GM12878 (cell line): ENCODE measurements at regions of chr4 and their contacts with region 1.

Region 1: GRCh38 chr4:109815151-109816081 is at the start of gene GAR1:
- DNase-seq: peak; percentile 72
- ATAC-seq: peak; percentile 94
- H3K4me3 ChIP-seq: peak within 1 kb of the TSS; percentile 96
- H3K27ac ChIP-seq: peak within 1 kb of the TSS; percentile 91
- H3K4me1 ChIP-seq: no peaks in the 10 kb centered on the region
- H3K27me3 ChIP-seq: no peaks in the 10 kb centered on the region
- CTCF ChIP-seq: 0 out of 6 replicates have a peak, but pooled peaks of 1 of the 3 experiments have one; percentile 2
- EP300 ChIP-seq: peak in 1 of 2 experiments; percentile 19; a peak in 1 of 4 replicates
- POLR2A ChIP-seq: peak; percentile 81; the same call in 1 of the 2 replicates
- RAD21 ChIP-seq: no peak
- polyA plus RNA-seq, gene GAR1: 16.6 to 20.5 TPM

Region 2: DNA sequence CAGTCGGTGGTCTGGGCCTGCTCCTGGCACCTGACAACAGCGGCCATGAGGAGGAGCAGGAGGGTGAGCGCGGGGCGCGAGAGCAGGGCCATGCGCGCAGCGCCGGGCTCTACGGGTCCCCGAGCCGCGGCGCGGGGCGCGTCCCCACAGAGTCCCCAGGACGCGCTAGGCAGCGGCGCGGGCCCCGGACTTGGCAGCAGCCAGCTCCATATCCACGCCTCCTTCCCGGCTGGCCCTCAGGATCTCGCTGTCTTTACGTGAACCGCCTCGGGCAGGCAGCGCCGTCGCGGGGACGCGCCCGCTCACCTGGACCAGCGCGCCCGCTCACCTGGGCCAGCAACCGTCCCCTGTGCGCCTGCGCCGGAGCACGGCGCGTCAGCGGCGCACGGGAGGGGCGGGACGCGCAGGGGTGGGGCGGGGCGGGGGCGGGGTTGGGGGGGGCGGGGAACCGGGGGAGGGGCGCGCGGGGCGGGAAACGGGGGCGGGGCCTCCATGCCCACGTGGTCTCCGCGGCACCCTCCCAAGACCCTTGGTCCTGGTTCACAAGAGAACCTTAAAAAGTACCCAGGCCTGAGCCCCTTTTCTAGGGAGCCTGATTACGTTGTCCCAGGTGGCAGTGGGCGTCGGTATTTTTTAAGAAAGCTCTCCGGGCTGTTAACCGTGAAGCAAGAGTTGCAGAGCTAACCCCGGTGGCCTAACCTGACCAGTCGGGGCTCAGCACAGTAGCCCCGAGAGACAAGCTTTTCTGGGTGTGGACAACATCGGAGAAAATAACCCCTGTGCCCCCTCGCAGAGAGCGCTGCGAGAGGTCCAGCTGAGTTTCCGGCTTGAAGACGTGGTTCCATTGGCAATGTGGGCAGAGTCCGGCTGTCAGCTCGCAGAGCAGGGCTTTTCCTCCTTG is 85.4 kb before region 1 on chr4 and contains the start of gene PLA2G12A:
- CTCF ChIA-PET with region 1: no interaction called
- POLR2A ChIA-PET with region 1: interaction called, 4 read pairs
- RAD21 ChIA-PET with region 1: no interaction called
- SMC1A ChIA-PET with region 1: no interaction called
- in situ Hi-C with region 1: no loop called
- intact Hi-C with region 1: loop called (anchors 2 kb)
- DNase-seq: peak; percentile 16
- ATAC-seq: peak; percentile 93
- H3K4me3 ChIP-seq: peak within 1 kb of the TSS; percentile 91
- H3K27ac ChIP-seq: peak within 1 kb of the TSS; percentile 64
- H3K4me1 ChIP-seq: no peaks in the 10 kb centered on the region
- H3K27me3 ChIP-seq: no peaks in the 10 kb centered on the region
- CTCF ChIP-seq: no peak
- EP300 ChIP-seq: no peak
- POLR2A ChIP-seq: peak; percentile 75
- RAD21 ChIP-seq: no peak
- polyA plus RNA-seq, gene PLA2G12A: 3.7 to 6.2 TPM

Region 3: DNA sequence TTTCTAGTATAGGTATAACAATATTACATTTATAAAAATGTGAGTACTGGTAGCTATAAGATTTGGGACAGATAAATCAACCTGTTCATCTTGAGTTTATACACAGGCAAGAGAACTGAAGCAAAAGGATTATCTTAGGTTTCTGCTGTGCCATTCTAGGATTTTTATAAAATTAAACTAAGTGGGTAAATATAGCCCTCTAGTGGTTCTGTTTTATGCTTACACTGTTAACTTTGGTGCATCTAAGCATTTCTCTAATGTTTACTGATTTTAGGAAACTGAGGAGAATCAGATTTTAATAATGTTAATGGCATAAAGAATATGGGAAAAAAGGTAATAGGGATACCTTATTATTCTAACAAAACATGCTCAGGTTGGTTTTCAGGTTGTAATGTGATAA is 11.3 kb after region 1 on chr4:
- CTCF ChIA-PET with region 1: interaction called, 10 read pairs
- POLR2A ChIA-PET with region 1: no interaction called
- RAD21 ChIA-PET with region 1: no interaction called
- SMC1A ChIA-PET with region 1: interaction called, 3 read pairs
- in situ Hi-C with region 1: no loop called
- intact Hi-C with region 1: no loop called
- DNase-seq: no peak
- ATAC-seq: peak; percentile 80
- H3K4me3 ChIP-seq: no peak overlapping the region
- H3K27ac ChIP-seq: no peak overlapping the region
- H3K4me1 ChIP-seq: no peaks in the 10 kb centered on the region
- H3K27me3 ChIP-seq: no peaks in the 10 kb centered on the region
- CTCF ChIP-seq: peak; percentile 22 to 54 (median 40); a peak in 4 of 6 replicates
- EP300 ChIP-seq: no peak
- POLR2A ChIP-seq: no peak
- RAD21 ChIP-seq: peak; percentile 69

Region 4: GRCh38 chr4:109990261-109991257 is 175.1 kb after region 1 on chr4:
- CTCF ChIA-PET with region 1: no interaction called
- POLR2A ChIA-PET with region 1: no interaction called
- RAD21 ChIA-PET with region 1: no interaction called
- SMC1A ChIA-PET with region 1: no interaction called
- in situ Hi-C with region 1: no loop called
- intact Hi-C with region 1: loop called (anchors 5 kb)
- DNase-seq: peak; percentile 87
- ATAC-seq: peak; percentile 88
- H3K4me3 ChIP-seq: peak overlapping the region; percentile 30; the same call in 1 of the 2 replicates
- H3K27ac ChIP-seq: peak overlapping the region; percentile 73
- H3K4me1 ChIP-seq: peaks cover 36% of the 10 kb centered on the region
- H3K27me3 ChIP-seq: no peaks in the 10 kb centered on the region
- CTCF ChIP-seq: no peak
- EP300 ChIP-seq: peak; percentile 79 to 90
- POLR2A ChIP-seq: no peak
- RAD21 ChIP-seq: no peak